B cell (primary cell): ENCODE measurements at regions of chr1 and their contacts with region 1.

Region 1: DNA sequence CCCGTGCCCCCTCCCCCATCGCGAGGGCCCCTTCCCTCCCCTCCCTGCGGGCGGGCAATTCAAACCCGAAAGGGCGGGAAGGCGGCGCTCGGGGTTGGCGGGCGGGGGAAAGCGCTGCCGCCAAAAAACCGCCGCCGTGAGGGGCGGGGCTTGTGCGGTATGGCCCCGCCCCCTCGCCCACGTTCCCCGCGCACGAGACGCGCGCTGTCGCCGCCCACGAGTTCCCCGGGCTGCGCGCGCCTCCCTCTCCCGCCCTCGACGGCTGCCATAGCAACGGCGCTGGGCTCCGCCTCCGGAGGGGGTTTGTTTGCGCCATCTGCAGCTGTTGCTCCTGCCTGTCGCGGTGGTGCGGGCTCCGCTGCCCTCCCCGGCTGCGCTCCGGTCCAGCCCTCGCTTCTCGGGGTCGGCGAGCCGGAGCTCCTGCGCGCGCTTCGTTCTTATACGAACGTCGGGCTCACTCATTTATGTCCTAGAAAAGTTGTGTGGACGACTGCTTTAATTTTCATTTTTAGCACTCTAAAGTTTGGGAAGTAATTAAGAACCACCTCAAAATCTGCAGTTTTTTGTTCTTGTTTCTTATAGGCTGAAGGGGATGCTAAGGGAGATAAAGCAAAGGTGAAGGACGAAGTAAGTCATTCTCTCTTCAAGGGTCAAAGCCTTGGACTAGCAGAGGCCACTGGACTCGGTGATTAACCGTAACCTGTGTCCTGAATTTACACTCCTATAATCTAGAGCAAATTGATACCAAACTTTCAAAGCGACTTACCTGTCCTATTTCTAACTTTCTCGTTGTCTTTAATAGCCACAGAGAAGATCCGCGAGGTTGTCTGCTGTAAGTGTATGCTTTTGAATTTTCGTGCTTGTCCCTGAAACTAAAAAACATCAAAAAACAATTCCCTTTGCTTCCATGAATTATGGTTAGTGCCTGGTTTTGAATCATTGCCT is 933 bp downstream of the HMGN2 start:
- DNase-seq: peak; percentile 98
- ATAC-seq: peak; percentile 79
- H3K4me3 ChIP-seq: peak overlapping the region; percentile 72 to 91 (median 80)
- H3K4me3 Mint-ChIP-seq: peak overlapping the region; percentile 90
- H3K27ac ChIP-seq: peak overlapping the region; percentile 95 to 98
- H3K27ac Mint-ChIP-seq: peak overlapping the region; percentile 90
- H3K4me1 ChIP-seq: peaks cover 35% of the 10 kb centered on the region in 2 donors
- H3K4me1 Mint-ChIP-seq: peaks cover 58% of the 10 kb centered on the region
- H3K27me3 ChIP-seq: no peaks in the 10 kb centered on the region
- H3K27me3 Mint-ChIP-seq: no peaks in the 10 kb centered on the region
- CTCF ChIP-seq: no peak

Region 2: DNA sequence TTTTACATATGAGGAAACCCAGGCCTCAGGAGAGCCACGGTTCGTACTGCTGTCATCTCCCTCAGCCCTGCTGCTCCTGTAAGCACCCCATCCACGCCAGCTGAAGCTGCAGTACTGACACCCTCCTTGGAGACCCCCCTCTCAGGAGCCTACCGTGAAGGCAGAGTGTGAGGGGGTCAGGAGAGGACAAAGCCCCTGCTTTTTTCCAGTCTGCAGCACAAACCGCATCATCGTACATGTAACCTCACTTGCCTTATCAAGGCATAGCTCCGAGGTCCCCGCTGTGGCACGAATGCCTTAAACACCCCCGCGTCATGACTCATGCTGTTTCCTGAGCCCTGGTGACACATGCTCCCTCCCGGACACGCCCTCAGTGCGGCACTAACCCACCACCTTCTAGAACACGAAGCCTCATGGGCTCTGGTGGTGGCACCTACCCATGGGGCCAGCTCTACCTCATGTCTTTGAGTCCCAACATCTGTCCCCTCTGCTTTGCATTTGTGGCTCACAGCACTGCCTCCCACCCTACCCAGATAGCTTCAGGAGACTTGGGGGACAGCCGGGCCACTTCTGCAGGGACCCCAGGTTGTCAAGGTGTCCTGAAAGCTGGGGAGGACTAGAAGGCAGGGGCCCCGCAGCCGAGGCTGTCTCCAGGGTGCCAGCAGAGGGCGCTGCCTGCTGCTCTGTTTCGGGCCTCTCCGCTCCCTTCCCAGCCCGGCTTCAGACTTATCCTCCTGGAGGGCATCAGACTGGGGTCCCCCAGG is 188.4 kb before region 1 on chr1:
- CTCF ChIA-PET with region 1: interaction called, 3 read pairs
- POLR2A ChIA-PET with region 1: no interaction called
- intact Hi-C with region 1: loop called (anchors 5 kb)
- DNase-seq: peak; percentile 87
- ATAC-seq: peak; percentile 47
- H3K4me3 ChIP-seq: peak overlapping the region in 2 of 5 experiments; percentile 5 to 19
- H3K4me3 Mint-ChIP-seq: peak overlapping the region; percentile 87
- H3K27ac ChIP-seq: peak overlapping the region; percentile 93 to 96
- H3K27ac Mint-ChIP-seq: peak overlapping the region; percentile 97
- H3K4me1 ChIP-seq: peaks cover 79 to 89% of the 10 kb centered on the region in 2 donors
- H3K4me1 Mint-ChIP-seq: peaks cover 88% of the 10 kb centered on the region
- H3K27me3 ChIP-seq: no peaks in the 10 kb centered on the region
- H3K27me3 Mint-ChIP-seq: no peaks in the 10 kb centered on the region
- CTCF ChIP-seq: peak; percentile 77

Region 3: GRCh38 chr1:26408604-26409003 is 64.6 kb before region 1 on chr1:
- CTCF ChIA-PET with region 1: interaction called, 3 read pairs
- POLR2A ChIA-PET with region 1: no interaction called
- intact Hi-C with region 1: loop called (anchors 2 kb)
- DNase-seq: peak; percentile 85
- ATAC-seq: peak; percentile 92
- H3K4me3 ChIP-seq: no peak overlapping the region
- H3K4me3 Mint-ChIP-seq: no peak overlapping the region
- H3K27ac ChIP-seq: no peak overlapping the region
- H3K27ac Mint-ChIP-seq: peak overlapping the region; percentile 41
- H3K4me1 ChIP-seq: peaks cover 17 to 18% of the 10 kb centered on the region in 2 donors
- H3K4me1 Mint-ChIP-seq: peaks cover 15% of the 10 kb centered on the region
- H3K27me3 ChIP-seq: peaks cover 0 to 55% (median 36%) of the 10 kb centered on the region in 4 experiments
- H3K27me3 Mint-ChIP-seq: peaks cover 63% of the 10 kb centered on the region
- CTCF ChIP-seq: no peak

Region 4: DNA sequence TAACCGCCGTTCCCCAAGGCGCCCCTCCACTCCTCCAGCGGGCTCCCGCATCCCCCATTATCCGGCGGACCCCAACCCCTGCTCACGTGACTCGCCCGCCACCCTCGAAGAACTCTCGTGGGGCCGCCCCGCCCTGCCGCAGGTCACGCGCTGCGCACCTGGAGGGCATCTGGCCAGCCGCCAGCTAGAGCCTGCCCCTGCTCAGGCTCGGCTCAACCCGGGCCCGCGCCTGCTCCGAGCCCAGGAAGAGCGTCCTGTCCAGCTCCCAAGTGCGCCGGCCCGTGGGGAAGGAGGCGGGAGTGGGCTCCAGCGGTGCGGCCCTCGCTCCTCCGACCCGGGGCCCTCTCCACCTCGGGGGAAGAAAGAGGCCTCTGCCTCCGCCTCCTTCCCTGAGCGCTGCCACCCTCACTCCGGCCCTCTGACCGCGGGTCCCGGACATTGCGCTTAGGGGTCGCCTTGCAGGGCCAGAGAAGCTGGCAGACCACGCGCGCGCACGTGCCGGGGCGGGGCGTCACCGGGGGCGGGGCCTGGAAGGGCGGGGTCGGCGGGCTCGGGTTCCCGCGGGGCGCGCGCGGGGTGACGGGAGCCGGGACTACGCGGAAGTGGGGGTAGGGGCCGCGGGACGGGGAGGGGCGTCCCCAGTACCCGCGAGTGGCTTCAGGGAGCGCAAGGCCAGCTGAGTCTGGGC is 27.5 kb after region 1 on chr1:
- CTCF ChIA-PET with region 1: interaction called, 13 read pairs
- POLR2A ChIA-PET with region 1: interaction called, 39 read pairs
- intact Hi-C with region 1: loop called (anchors 1 kb)
- DNase-seq: peak; percentile 96
- ATAC-seq: peak; percentile 75
- H3K4me3 ChIP-seq: peak overlapping the region in 4 of 5 experiments; percentile 74 to 93 (median 88)
- H3K4me3 Mint-ChIP-seq: peak overlapping the region; percentile 91
- H3K27ac ChIP-seq: peak overlapping the region; percentile 100
- H3K27ac Mint-ChIP-seq: peak overlapping the region; percentile 98
- H3K4me1 ChIP-seq: peaks cover 7 to 19% of the 10 kb centered on the region in 2 donors
- H3K4me1 Mint-ChIP-seq: peaks cover 8% of the 10 kb centered on the region
- H3K27me3 ChIP-seq: no peaks in the 10 kb centered on the region
- H3K27me3 Mint-ChIP-seq: no peaks in the 10 kb centered on the region
- CTCF ChIP-seq: peak; percentile 44

Region 5: DNA sequence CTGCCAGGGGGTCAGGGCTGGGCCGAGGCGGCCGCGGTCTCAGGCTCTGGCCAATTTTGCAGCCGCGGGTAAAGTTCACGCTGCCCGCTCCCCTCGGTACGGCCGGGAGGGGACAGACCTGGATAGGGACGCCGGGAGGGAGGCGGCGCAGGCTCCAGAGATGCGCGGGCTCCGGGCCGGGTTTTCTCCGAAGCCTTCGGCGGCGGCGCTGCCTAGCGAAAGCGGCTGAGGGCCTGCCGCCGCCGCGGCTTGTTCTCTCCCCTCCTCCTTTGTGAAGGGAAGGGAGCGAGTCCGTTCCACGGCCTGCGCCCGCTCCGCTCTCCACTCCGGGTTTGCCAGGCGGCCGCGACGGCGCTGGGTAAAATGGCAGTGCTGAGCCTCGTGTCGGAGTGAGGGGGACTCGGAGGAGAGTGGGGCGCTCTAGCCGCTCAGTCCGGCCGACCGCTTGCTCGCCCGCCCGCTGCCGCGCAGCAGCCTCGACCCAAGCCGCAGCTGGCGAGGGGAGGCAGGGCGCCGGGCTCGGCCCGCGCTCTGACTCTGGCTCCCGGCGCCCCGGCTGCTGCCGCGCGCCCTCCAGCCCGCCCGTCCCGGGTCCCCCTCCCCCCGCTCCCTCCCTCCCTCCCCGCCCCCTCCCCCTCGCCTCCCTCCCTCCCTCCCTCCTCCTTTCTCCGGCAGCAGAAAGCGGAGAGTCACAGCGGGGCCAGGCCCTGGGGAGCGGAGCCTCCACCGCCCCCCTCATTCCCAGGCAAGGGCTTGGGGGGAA is 222.4 kb after region 1 on chr1 and contains the start of gene ARID1A:
- CTCF ChIA-PET with region 1: interaction called, 3 read pairs
- POLR2A ChIA-PET with region 1: no interaction called
- intact Hi-C with region 1: loop called (anchors 2 kb)
- DNase-seq: peak; percentile 99
- ATAC-seq: peak; percentile 62
- H3K4me3 ChIP-seq: peak within 1 kb of the TSS; percentile 22 to 84 (median 73)
- H3K4me3 Mint-ChIP-seq: peak within 1 kb of the TSS; percentile 91
- H3K27ac ChIP-seq: peak within 1 kb of the TSS; percentile 67 to 93
- H3K27ac Mint-ChIP-seq: peak within 1 kb of the TSS; percentile 93
- H3K4me1 ChIP-seq: peaks cover 46 to 48% of the 10 kb centered on the region in 2 donors
- H3K4me1 Mint-ChIP-seq: peaks cover 30% of the 10 kb centered on the region
- H3K27me3 ChIP-seq: no peaks in the 10 kb centered on the region
- H3K27me3 Mint-ChIP-seq: no peaks in the 10 kb centered on the region
- CTCF ChIP-seq: no peak
- total RNA-seq, gene ARID1A: 150 and 152 TPM in 2 replicates

Region 6: GRCh38 chr1:26986658-26987057 is 513.5 kb after region 1 on chr1:
- CTCF ChIA-PET with region 1: no interaction called
- POLR2A ChIA-PET with region 1: no interaction called
- intact Hi-C with region 1: no loop called
- DNase-seq: no peak
- ATAC-seq: no peak
- H3K4me3 ChIP-seq: no peak overlapping the region
- H3K4me3 Mint-ChIP-seq: no peak overlapping the region
- H3K27ac ChIP-seq: no peak overlapping the region
- H3K27ac Mint-ChIP-seq: no peak overlapping the region
- H3K4me1 ChIP-seq: no peaks in the 10 kb centered on the region
- H3K4me1 Mint-ChIP-seq: peaks cover 4% of the 10 kb centered on the region
- H3K27me3 ChIP-seq: peaks cover 0 to 15% (median 2%) of the 10 kb centered on the region in 4 experiments
- H3K27me3 Mint-ChIP-seq: peaks cover 31% of the 10 kb centered on the region
- CTCF ChIP-seq: no peak